ENCODE measurements at regions of chr17 and their contacts with region 1.

Region 1: GRCh38 chr17:8057691-8058114 is 18.8 kb downstream of the ALOX15B start:
- DNase-seq: peak; percentile 46
- H3K4me3 Mint-ChIP-seq: no peak overlapping the region
- H3K27ac Mint-ChIP-seq: no peak overlapping the region
- H3K4me1 Mint-ChIP-seq: peaks cover 12% of the 10 kb centered on the region
- H3K27me3 Mint-ChIP-seq: peaks cover 42% of the 10 kb centered on the region

Region 2: DNA sequence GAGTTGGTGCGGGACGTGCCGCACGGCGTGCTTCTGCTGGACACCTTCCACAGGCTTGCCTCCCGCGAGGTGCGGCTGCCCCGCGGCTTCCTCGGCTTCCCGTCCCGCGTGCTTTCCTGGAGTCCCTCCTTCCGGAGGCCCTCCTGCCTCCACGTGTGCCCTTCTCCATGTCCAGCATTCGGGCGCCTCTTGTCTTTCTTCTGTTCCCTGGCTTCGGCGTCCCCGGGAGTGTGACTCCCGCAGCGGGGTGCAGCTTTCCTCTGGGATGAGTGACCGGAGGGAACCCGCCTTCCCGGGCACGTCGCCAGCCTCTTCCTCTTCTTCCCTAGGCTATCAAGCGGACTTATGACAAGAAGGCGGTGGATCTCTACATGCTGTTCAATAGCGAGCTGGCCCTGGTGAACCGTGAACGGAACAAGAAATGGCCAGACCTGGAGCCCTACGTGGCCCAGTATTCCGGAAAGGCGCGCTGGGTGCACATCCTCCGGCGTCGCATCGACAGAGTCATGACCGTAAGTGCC is 317.2 kb before region 1 on chr17:
- CTCF ChIA-PET with region 1: interaction called, 22 read pairs
- POLR2A ChIA-PET with region 1: no interaction called
- intact Hi-C with region 1: loop called (anchors 5 kb)
- DNase-seq: no peak
- H3K4me3 Mint-ChIP-seq: no peak overlapping the region
- H3K27ac Mint-ChIP-seq: no peak overlapping the region
- H3K4me1 Mint-ChIP-seq: no peaks in the 10 kb centered on the region
- H3K27me3 Mint-ChIP-seq: peaks cover 11% of the 10 kb centered on the region

Region 3: GRCh38 chr17:7915611-7916382 is 141.9 kb before region 1 on chr17 and contains the start of gene RNF227:
- CTCF ChIA-PET with region 1: interaction called, 19 read pairs
- POLR2A ChIA-PET with region 1: no interaction called
- intact Hi-C with region 1: loop called (anchors 2 kb)
- DNase-seq: peak; percentile 92
- H3K4me3 Mint-ChIP-seq: peak within 1 kb of the TSS; percentile 85
- H3K27ac Mint-ChIP-seq: peak within 1 kb of the TSS; percentile 86
- H3K4me1 Mint-ChIP-seq: peaks cover 29% of the 10 kb centered on the region
- H3K27me3 Mint-ChIP-seq: no peaks in the 10 kb centered on the region
- total RNA-seq, gene RNF227: 2.7 to 3.3 TPM

Region 4: DNA sequence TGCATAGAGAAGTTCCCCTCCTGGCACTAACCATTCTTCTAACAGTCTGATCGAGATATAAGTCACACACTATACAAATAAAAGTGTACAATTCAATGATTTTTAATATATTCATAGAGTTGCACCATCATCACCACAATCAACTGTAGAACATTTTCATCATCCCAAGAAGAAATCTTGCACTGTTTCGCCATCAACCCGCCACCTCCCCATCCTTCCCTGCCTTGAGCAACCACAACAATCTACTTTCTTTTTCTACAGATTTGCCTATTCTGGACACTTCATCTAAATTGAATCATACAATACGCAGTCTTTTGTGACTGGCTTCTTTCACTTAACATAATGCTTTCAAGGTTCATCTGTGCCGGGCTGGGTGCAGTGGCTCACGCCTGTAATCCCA is 88.3 kb before region 1 on chr17:
- CTCF ChIA-PET with region 1: no interaction called
- POLR2A ChIA-PET with region 1: no interaction called
- intact Hi-C with region 1: no loop called
- DNase-seq: no peak
- H3K4me3 Mint-ChIP-seq: no peak overlapping the region
- H3K27ac Mint-ChIP-seq: peak overlapping the region; percentile 57
- H3K4me1 Mint-ChIP-seq: no peaks in the 10 kb centered on the region
- H3K27me3 Mint-ChIP-seq: peaks cover 2% of the 10 kb centered on the region

Region 5: DNA sequence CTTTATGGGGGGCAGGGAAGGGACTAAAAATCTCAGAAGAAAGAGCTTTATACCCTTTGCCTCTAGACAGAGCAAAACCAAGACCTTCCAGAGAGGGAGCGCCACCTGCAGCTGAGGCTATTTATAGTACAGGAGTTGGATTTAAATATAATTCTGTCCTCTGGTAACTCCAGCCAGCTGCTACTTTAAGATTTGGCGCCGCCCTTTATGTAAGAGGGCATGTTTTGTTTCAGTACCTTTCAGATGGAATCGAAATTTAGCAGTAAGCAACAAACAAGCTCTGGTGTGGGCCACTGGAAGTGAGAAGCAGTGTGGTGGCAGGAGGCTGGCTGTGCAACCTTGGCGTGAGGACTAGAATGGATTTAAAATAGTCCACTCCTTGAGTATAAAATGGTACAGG is 60.5 kb before region 1 on chr17:
- CTCF ChIA-PET with region 1: interaction called, 8 read pairs
- POLR2A ChIA-PET with region 1: no interaction called
- intact Hi-C with region 1: loop called (anchors 2 kb)
- DNase-seq: peak; percentile 61
- H3K4me3 Mint-ChIP-seq: no peak overlapping the region
- H3K27ac Mint-ChIP-seq: no peak overlapping the region
- H3K4me1 Mint-ChIP-seq: peaks cover 4% of the 10 kb centered on the region
- H3K27me3 Mint-ChIP-seq: peaks cover 15% of the 10 kb centered on the region

Region 6: DNA sequence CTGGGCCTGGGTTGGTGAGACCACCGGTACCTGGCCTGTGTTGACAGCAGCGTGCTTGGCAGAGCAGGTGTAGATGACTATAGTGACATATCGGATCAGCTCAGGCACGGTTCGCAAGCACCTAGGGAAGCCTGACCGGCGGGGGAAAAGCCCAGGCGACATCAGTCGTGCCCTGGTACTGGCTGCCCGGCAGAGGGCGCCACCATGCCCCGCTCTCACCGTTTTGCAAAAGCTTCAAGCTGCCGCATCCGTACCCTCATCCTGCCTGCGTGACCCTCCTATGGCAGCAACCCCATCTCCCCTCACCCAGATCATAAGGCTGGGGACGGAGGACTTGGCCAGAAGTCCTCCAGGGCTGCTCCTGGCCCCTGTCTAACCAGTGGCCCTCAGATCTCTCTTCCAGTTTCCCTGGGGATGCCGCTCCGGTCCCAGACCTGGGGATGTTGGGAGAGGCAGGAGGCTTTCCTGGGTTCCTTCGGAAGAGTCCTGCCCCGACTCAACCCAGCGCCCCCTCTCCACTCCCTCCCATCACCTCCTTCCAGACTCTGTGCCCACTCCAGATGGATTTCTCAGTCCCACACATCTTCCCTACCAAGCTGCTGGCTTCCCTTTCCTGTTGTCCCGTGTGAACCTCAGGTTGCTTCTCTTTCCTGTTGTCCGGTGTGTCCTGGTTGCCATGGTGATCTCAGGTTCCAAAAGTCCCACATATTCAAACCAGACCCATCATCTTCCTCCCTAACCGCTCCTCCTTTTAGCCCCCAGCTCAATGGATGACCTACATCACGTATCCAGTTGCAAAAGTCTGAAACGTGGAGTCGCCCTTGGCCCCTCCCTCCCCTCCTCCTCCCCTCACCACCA is 16.2 kb after region 1 on chr17:
- CTCF ChIA-PET with region 1: interaction called, 298 read pairs
- POLR2A ChIA-PET with region 1: interaction called, 5 read pairs
- intact Hi-C with region 1: loop called (anchors 1 kb)
- DNase-seq: peak; percentile 91
- H3K4me3 Mint-ChIP-seq: peak overlapping the region; percentile 70
- H3K27ac Mint-ChIP-seq: no peak overlapping the region
- H3K4me1 Mint-ChIP-seq: peaks cover 18% of the 10 kb centered on the region
- H3K27me3 Mint-ChIP-seq: peaks cover 40% of the 10 kb centered on the region

Region 7: DNA sequence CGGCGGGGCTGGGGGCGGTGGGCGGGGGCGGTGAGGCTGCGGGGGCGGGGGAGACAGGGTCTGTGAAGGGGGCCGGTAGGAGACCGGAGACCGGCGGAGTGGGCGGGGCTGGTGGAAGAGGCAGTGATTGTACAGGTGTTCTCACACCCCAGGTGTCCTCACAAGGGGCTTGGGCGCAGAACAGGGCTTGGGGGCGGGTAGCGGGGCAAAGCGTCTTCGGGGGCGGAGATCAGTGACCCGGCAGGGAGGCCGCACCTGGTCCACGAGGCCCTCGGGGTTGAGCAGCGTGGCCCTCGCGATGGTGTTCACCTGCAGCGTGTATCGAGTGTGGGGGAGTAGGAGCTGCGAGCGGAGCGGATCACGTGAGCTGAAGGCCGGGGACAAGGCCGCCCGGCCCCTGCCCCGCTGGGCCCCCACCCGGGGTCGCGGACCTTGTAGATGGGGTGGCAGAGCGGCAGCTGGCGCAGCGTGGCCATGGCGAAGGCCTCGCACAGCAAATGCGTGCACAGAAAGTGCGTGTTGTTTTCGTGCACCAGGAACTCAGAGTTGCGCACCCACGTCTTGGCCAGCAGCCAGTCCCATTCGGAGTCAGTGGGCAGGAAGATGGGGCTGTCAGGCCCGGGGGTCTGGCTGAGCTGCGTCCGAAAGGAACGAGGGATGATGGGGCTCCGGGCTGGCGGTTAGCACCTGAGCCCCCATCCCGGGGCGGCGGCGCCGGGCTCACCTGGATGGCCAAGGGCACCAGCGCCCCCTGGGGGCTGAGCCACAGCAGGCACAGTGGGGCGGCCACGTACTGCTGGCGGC is 52.2 kb after region 1 on chr17:
- CTCF ChIA-PET with region 1: interaction called, 120 read pairs
- POLR2A ChIA-PET with region 1: no interaction called
- intact Hi-C with region 1: loop called (anchors 1 kb)
- DNase-seq: peak; percentile 85
- H3K4me3 Mint-ChIP-seq: peak overlapping the region; percentile 45
- H3K27ac Mint-ChIP-seq: no peak overlapping the region
- H3K4me1 Mint-ChIP-seq: peaks cover 8% of the 10 kb centered on the region
- H3K27me3 Mint-ChIP-seq: peaks cover 20% of the 10 kb centered on the region

Region 8: GRCh38 chr17:8300627-8301242 is 243.0 kb after region 1 on chr17:
- CTCF ChIA-PET with region 1: interaction called, 17 read pairs
- POLR2A ChIA-PET with region 1: no interaction called
- intact Hi-C with region 1: loop called (anchors 1 kb)
- DNase-seq: peak; percentile 68
- H3K4me3 Mint-ChIP-seq: no peak overlapping the region
- H3K27ac Mint-ChIP-seq: no peak overlapping the region
- H3K4me1 Mint-ChIP-seq: peaks cover 9% of the 10 kb centered on the region
- H3K27me3 Mint-ChIP-seq: no peaks in the 10 kb centered on the region